BJ (cell line): ENCODE measurements at regions of chr11 and their contacts with region 1.

Region 1: GRCh38 chr11:17846852-17847453 is 112.4 kb downstream of the KCNC1 start:
- DNase-seq: no peak
- H3K4me3 ChIP-seq: no peak overlapping the region
- H3K27me3 ChIP-seq: no peaks in the 10 kb centered on the region
- CTCF ChIP-seq: no peak

Region 2: DNA sequence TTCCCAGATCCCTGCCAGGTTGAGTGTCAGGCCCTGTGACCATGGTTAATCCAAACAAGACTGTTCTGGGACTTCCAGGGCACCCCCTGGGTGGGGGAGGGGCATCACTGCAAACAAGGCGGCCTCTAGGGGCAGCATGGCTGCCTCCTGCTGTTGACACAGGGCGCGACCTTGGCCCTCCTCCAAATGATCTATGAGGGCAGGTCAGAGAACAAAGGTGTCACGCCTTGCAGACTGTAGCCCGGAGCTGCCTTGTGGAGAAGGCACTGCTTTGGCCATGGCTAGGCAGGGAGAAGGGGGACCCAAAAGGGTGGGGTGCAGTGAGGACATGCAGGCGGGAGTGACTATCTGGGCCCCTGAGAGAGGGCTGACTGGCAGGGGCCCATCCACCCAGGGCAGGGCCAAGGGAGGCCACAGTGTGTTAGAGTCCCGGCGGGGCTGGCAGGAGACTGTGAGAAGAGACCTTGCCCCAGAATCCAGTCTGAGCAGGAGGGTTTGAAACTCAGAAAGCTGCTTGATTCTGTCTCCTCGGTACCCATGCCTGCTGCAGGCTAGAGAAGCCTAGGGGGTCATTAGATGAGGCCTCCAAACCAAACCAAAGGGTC is 76.8 kb before region 1 on chr11:
- CTCF ChIA-PET with region 1: no interaction called
- POLR2A ChIA-PET with region 1: no interaction called
- DNase-seq: no peak
- H3K4me3 ChIP-seq: no peak overlapping the region
- H3K27me3 ChIP-seq: no peaks in the 10 kb centered on the region; the same call in 1 of the 2 replicates
- CTCF ChIP-seq: peak; percentile 9; the same call in 1 of the 2 replicates

Region 3: GRCh38 chr11:17786824-17787525 is 60.0 kb before region 1 on chr11:
- CTCF ChIA-PET with region 1: no interaction called
- POLR2A ChIA-PET with region 1: no interaction called
- DNase-seq: peak; percentile 35
- H3K4me3 ChIP-seq: no peak overlapping the region
- H3K27me3 ChIP-seq: no peaks in the 10 kb centered on the region
- CTCF ChIP-seq: no peak

Region 4: DNA sequence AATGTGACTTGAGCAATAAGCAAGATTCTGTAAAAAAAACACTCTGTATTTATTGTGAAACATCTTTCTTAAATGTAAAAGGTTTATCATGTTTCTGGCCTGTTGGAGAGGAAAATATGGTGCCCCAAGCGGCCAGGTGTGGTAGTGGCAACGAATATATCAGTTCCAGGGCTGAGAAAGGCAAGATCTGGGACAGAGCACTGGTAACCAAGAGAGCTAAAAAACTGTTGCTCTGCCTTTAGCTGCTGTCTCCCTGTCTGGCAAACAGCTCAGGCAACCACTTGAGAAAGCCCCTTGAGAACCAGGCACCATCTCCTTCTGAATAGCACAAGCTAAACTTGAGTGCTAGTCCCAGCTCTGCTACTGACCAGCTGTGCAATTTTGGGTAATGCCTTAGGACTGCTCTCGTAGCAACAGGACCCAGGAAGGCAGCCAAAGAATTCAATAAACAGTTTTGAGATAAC is 17.6 kb after region 1 on chr11:
- CTCF ChIA-PET with region 1: interaction called, 8 read pairs
- POLR2A ChIA-PET with region 1: interaction called, 34 read pairs
- DNase-seq: no peak
- H3K4me3 ChIP-seq: no peak overlapping the region
- H3K27me3 ChIP-seq: no peaks in the 10 kb centered on the region
- CTCF ChIP-seq: peak; percentile 43